IMR-90 (cell line): ENCODE measurements at regions of chr6 and their contacts with region 1.

Region 1: GRCh38 chr6:83057705-83058321 is 7.8 kb downstream of the UBE3D start:
- DNase-seq: peak; percentile 55
- ATAC-seq: peak; percentile 62
- H3K4me3 ChIP-seq: no peak overlapping the region
- H3K27ac ChIP-seq: no peak overlapping the region
- H3K4me1 ChIP-seq: peaks cover 2% of the 10 kb centered on the region; the same call in 1 of the 2 replicates
- H3K27me3 ChIP-seq: no peaks in the 10 kb centered on the region
- CTCF ChIP-seq: peak; percentile 79
- POLR2A ChIP-seq: no peak
- RAD21 ChIP-seq: peak; percentile 84

Region 2: GRCh38 chr6:82247634-82248232 is 810.1 kb before region 1 on chr6 and contains the start of gene IBTK:
- CTCF ChIA-PET with region 1: interaction called, 5 read pairs
- POLR2A ChIA-PET with region 1: no interaction called
- dilution Hi-C with region 1: no loop called
- in situ Hi-C with region 1: loop called (anchors 5 kb)
- intact Hi-C with region 1: loop called (anchors 1 kb)
- DNase-seq: peak; percentile 88
- ATAC-seq: peak; percentile 86
- H3K4me3 ChIP-seq: peak within 1 kb of the TSS; percentile 80
- H3K27ac ChIP-seq: peak within 1 kb of the TSS; percentile 91
- H3K4me1 ChIP-seq: peaks cover 10% of the 10 kb centered on the region
- H3K27me3 ChIP-seq: no peaks in the 10 kb centered on the region
- CTCF ChIP-seq: no peak
- POLR2A ChIP-seq: peak; percentile 88
- RAD21 ChIP-seq: no peak
- total RNA-seq, gene IBTK: 45.0 and 60.5 TPM in 2 replicates

Region 3: DNA sequence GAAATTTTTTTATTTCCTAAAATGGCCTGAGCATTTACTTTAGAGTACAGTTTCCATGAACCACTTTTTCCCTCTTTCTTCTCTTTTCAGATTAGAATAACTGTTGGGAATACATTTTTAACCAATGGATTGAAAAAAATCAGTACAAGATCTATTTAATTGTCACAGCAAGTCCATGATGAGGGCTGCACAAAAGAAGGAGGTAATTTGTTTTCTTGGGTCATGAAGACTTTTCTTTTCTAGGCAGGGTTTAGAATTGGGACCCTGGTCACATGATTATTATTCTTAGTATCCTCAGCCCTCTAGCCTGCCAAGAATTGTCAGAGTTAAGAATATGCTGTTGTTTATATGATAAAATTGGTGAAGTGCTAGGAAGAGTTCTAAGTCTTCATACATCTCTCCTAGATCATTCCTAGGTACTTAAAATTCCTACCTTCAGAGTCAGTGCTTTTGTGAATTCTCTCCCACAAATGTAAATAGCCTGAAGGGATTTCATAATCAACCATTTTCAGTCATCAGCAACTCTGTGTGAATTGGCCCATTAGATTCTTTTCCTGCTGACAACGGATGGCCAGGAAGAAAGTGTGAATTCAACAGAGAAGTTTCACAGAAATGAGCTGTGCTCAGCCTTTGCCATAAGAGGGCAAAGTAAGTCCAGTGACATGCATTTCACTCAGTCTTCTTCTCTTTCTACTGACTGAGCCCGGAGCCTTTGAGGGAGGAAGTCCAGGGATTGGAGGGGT is 726.6 kb before region 1 on chr6:
- CTCF ChIA-PET with region 1: interaction called, 3 read pairs
- POLR2A ChIA-PET with region 1: no interaction called
- dilution Hi-C with region 1: no loop called
- in situ Hi-C with region 1: no loop called
- intact Hi-C with region 1: loop called (anchors 1 kb)
- DNase-seq: peak; percentile 42
- ATAC-seq: peak; percentile 83
- H3K4me3 ChIP-seq: no peak overlapping the region
- H3K27ac ChIP-seq: no peak overlapping the region
- H3K4me1 ChIP-seq: no peaks in the 10 kb centered on the region
- H3K27me3 ChIP-seq: peaks cover 6% of the 10 kb centered on the region
- CTCF ChIP-seq: peak; percentile 38
- POLR2A ChIP-seq: no peak
- RAD21 ChIP-seq: peak; percentile 54

Region 4: GRCh38 chr6:82442061-82442719 is 615.6 kb before region 1 on chr6:
- CTCF ChIA-PET with region 1: no interaction called
- POLR2A ChIA-PET with region 1: no interaction called
- dilution Hi-C with region 1: no loop called
- in situ Hi-C with region 1: no loop called
- intact Hi-C with region 1: no loop called
- DNase-seq: no peak
- ATAC-seq: no peak
- H3K4me3 ChIP-seq: no peak overlapping the region
- H3K27ac ChIP-seq: no peak overlapping the region
- H3K4me1 ChIP-seq: no peaks in the 10 kb centered on the region
- H3K27me3 ChIP-seq: no peaks in the 10 kb centered on the region; the same call in 1 of the 2 replicates
- CTCF ChIP-seq: no peak
- POLR2A ChIP-seq: no peak
- RAD21 ChIP-seq: no peak

Region 5: GRCh38 chr6:82589509-82590206 is 468.2 kb before region 1 on chr6:
- CTCF ChIA-PET with region 1: interaction called, 3 read pairs
- POLR2A ChIA-PET with region 1: no interaction called
- dilution Hi-C with region 1: no loop called
- in situ Hi-C with region 1: no loop called
- intact Hi-C with region 1: loop called (anchors 10 kb)
- DNase-seq: peak; percentile 64
- ATAC-seq: peak; percentile 21; the same call in 1 of the 2 replicates
- H3K4me3 ChIP-seq: no peak overlapping the region
- H3K27ac ChIP-seq: no peak overlapping the region
- H3K4me1 ChIP-seq: no peaks in the 10 kb centered on the region
- H3K27me3 ChIP-seq: peaks cover 2% of the 10 kb centered on the region; the same call in 1 of the 2 replicates
- CTCF ChIP-seq: peak; percentile 37
- POLR2A ChIP-seq: no peak
- RAD21 ChIP-seq: peak; percentile 40

Region 6: DNA sequence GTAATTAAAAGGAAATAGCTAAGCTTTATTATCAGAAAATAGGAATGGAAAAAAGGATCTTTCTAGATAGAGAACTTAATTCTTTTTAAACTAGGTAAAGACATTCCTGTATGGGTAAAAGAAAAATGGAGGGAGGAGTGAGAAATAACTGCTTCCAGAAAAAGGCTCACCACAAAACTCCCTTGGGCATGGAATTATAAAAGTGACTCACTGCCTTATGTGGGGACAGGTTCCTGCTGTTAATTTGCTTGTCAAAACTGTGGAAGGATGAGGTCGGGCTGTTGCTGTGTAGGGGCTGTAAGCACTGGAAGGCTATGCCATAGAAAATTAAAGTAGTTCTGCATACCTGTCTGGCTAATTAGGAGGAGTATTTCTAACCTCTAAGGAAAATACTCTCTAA is 150.9 kb before region 1 on chr6:
- CTCF ChIA-PET with region 1: no interaction called
- POLR2A ChIA-PET with region 1: no interaction called
- dilution Hi-C with region 1: no loop called
- in situ Hi-C with region 1: no loop called
- intact Hi-C with region 1: loop called (anchors 10 kb)
- DNase-seq: peak; percentile 61
- ATAC-seq: peak; percentile 72
- H3K4me3 ChIP-seq: no peak overlapping the region
- H3K27ac ChIP-seq: no peak overlapping the region
- H3K4me1 ChIP-seq: 0 out of 2 replicates have a peak, but pooled peaks cover 2% of the 10 kb centered on the region
- H3K27me3 ChIP-seq: no peaks in the 10 kb centered on the region
- CTCF ChIP-seq: no peak
- POLR2A ChIP-seq: no peak
- RAD21 ChIP-seq: no peak

Region 7: DNA sequence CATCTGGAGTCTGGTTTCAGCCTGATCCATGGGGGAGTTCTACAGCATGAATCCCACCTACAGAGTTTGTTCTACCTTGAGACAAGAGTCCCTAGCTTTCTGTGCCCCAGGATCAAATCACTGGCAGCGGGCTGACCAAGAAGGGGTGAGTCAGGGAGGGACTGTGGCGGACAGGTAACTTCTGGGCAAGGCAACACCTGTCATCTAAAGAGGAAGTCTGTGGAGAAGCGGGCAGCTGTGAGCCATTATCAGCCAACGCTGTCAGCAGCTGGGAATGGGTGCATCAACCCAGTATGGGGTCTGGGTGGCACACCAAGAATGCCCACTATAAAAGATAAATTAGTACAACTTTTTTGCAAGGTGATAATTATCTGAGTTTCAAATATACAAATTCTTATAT is 38.1 kb before region 1 on chr6:
- CTCF ChIA-PET with region 1: no interaction called
- POLR2A ChIA-PET with region 1: no interaction called
- dilution Hi-C with region 1: no loop called
- in situ Hi-C with region 1: no loop called
- intact Hi-C with region 1: no loop called
- DNase-seq: no peak
- ATAC-seq: no peak
- H3K4me3 ChIP-seq: no peak overlapping the region
- H3K27ac ChIP-seq: no peak overlapping the region
- H3K4me1 ChIP-seq: no peaks in the 10 kb centered on the region
- H3K27me3 ChIP-seq: no peaks in the 10 kb centered on the region
- CTCF ChIP-seq: no peak
- POLR2A ChIP-seq: no peak
- RAD21 ChIP-seq: no peak

Region 8: DNA sequence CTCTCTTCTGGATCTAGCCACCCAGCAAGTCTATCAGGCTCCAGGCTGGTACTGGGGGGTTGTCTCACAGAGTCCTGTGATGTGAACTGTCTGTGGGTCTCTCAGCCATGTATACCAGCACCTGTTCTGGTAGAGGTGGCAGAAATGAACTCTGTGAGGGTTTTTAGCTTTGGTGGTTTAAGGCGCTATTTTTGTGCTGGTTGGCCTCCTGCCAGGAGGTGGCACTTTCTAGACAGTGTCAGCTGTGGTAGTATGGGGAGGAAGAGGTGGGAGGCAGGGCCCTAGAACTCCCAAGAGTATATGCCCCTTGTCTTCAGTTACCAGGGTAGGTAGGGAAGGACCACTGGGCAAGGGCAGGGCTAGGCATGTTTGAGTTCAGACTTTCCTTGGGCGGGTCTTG is 575.3 kb after region 1 on chr6:
- CTCF ChIA-PET with region 1: no interaction called
- POLR2A ChIA-PET with region 1: no interaction called
- dilution Hi-C with region 1: no loop called
- in situ Hi-C with region 1: no loop called
- intact Hi-C with region 1: no loop called
- DNase-seq: no peak
- ATAC-seq: no peak
- H3K4me3 ChIP-seq: no peak overlapping the region
- H3K27ac ChIP-seq: no peak overlapping the region
- H3K4me1 ChIP-seq: no peaks in the 10 kb centered on the region
- H3K27me3 ChIP-seq: no peaks in the 10 kb centered on the region
- CTCF ChIP-seq: no peak
- POLR2A ChIP-seq: no peak
- RAD21 ChIP-seq: no peak